MCF 10A (cell line): ENCODE measurements at regions of chr2 and their contacts with region 1.

Region 1: GRCh38 chr2:238528953-238529781 is 102.4 kb downstream of the ASB1 start:
- DNase-seq: peak; percentile 36
- H3K4me3 Mint-ChIP-seq: no peak overlapping the region
- H3K27ac Mint-ChIP-seq: no peak overlapping the region
- H3K4me1 Mint-ChIP-seq: peaks cover 22% of the 10 kb centered on the region
- H3K27me3 Mint-ChIP-seq: no peaks in the 10 kb centered on the region
- CTCF ChIP-seq: no peak

Region 2: GRCh38 chr2:237874585-237875161 is 654.5 kb before region 1 on chr2:
- CTCF ChIA-PET with region 1: no interaction called
- POLR2A ChIA-PET with region 1: no interaction called
- intact Hi-C with region 1: no loop called
- DNase-seq: peak; percentile 93
- H3K4me3 Mint-ChIP-seq: peak overlapping the region; percentile 4
- H3K27ac Mint-ChIP-seq: peak overlapping the region; percentile 86
- H3K4me1 Mint-ChIP-seq: peaks cover 44% of the 10 kb centered on the region
- H3K27me3 Mint-ChIP-seq: no peaks in the 10 kb centered on the region
- CTCF ChIP-seq: no peak

Region 3: DNA sequence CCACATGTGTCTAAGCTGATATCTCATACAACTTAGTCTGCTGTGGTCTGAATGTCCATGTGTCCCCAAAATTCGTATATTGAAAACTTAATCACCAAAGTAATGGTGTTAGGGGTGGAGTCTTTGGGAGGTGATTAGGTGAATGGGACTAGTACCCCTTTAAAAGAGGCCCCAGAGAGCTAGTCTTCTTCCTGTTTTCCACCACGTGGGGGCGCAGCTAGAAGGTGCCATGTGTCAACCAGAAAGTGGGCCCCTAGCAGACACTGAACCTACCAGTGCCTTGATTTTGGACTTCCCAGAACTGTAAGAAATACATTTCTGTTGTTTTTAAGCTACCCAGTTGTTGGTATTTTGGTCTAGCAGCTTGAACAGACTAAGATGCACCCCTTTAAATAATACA is 15.8 kb before region 1 on chr2:
- CTCF ChIA-PET with region 1: interaction called, 10 read pairs
- POLR2A ChIA-PET with region 1: interaction called, 3 read pairs
- intact Hi-C with region 1: no loop called
- DNase-seq: peak; percentile 79
- H3K4me3 Mint-ChIP-seq: no peak overlapping the region
- H3K27ac Mint-ChIP-seq: no peak overlapping the region
- H3K4me1 Mint-ChIP-seq: no peaks in the 10 kb centered on the region
- H3K27me3 Mint-ChIP-seq: no peaks in the 10 kb centered on the region
- CTCF ChIP-seq: peak; percentile 68

Region 4: GRCh38 chr2:238551091-238551490 is 21.9 kb after region 1 on chr2:
- CTCF ChIA-PET with region 1: no interaction called
- POLR2A ChIA-PET with region 1: no interaction called
- intact Hi-C with region 1: no loop called
- DNase-seq: peak; percentile 60
- H3K4me3 Mint-ChIP-seq: no peak overlapping the region
- H3K27ac Mint-ChIP-seq: no peak overlapping the region
- H3K4me1 Mint-ChIP-seq: no peaks in the 10 kb centered on the region
- H3K27me3 Mint-ChIP-seq: peaks cover 5% of the 10 kb centered on the region
- CTCF ChIP-seq: no peak